CD4-positive, alpha-beta T cell (primary cell): ENCODE measurements at regions of chr19 and their contacts with region 1.

Region 1: GRCh38 chr19:2475702-2476450 is at the start of gene GADD45B:
- DNase-seq: peak; percentile 96 to 98 (median 98)
- ATAC-seq: peak; percentile 56
- H3K4me3 ChIP-seq: peak within 1 kb of the TSS; percentile 86
- H3K4me3 Mint-ChIP-seq: peak within 1 kb of the TSS; percentile 100
- H3K27ac ChIP-seq: peak within 1 kb of the TSS; percentile 37 to 80
- H3K27ac Mint-ChIP-seq: peak within 1 kb of the TSS; percentile 91
- H3K4me1 ChIP-seq: peaks cover 45% of the 10 kb centered on the region
- H3K4me1 Mint-ChIP-seq: peaks cover 25% of the 10 kb centered on the region
- H3K27me3 ChIP-seq: no peaks in the 10 kb centered on the region
- H3K27me3 Mint-ChIP-seq: peaks cover 4% of the 10 kb centered on the region
- CTCF ChIP-seq: no peak
- total RNA-seq, gene GADD45B: 284 to 285 TPM

Region 2: DNA sequence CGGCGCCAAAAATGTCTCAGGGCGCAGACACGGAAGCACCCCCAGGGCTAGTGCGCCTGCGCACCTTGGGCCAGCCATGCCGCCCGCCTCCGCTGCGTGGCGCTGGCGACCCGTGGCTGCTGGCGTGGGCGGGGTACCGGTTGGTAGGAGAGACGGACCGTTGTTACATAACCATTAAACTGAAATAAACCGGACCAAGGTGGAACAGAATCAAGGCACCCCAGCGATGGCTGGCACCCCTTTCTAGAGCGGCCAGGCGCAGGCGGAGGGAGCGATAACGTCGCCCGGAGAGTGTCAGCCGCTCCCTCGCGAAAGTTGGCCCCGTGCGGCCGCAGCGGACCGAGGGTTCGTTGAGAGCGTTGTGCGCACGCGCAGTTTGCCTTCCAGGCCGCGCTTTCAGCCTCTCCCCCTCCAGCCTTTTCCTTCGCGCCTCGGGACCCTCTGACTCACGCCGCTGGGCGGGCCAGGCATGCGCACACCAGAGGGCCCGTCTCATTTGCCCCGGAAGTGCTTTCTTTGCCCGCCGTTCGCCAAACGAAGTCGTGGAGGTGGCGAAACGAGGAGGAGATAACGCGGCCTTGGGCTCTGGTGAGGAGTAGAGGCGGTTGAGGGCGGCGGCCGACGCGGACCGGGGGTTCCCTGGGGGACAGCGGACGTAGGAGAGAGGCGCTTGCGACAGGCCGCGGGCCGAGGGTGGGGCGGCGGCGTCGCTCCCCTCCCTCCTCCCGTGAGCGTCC is 239.4 kb before region 1 on chr19 and contains the starts of genes PLEKHJ1 and SF3A2:
- CTCF ChIA-PET with region 1: no interaction called
- POLR2A ChIA-PET with region 1: interaction called, 7 read pairs
- intact Hi-C with region 1: loop called in 1 of 2 experiments (anchors 5 kb)
- DNase-seq: peak; percentile 94 to 99 (median 98)
- ATAC-seq: peak; percentile 81
- H3K4me3 ChIP-seq: peak within 1 kb of the TSS; percentile 80
- H3K4me3 Mint-ChIP-seq: peak within 1 kb of the TSS; percentile 98
- H3K27ac ChIP-seq: peak within 1 kb of the TSS; percentile 98 to 99
- H3K27ac Mint-ChIP-seq: peak within 1 kb of the TSS; percentile 99
- H3K4me1 ChIP-seq: peaks cover 79% of the 10 kb centered on the region
- H3K4me1 Mint-ChIP-seq: peaks cover 63% of the 10 kb centered on the region
- H3K27me3 ChIP-seq: no peaks in the 10 kb centered on the region
- H3K27me3 Mint-ChIP-seq: peaks cover 4% of the 10 kb centered on the region
- CTCF ChIP-seq: peak; percentile 99
- total RNA-seq, gene PLEKHJ1: 21.4 to 23.2 TPM
- total RNA-seq, gene SF3A2: 186 to 194 TPM

Region 3: DNA sequence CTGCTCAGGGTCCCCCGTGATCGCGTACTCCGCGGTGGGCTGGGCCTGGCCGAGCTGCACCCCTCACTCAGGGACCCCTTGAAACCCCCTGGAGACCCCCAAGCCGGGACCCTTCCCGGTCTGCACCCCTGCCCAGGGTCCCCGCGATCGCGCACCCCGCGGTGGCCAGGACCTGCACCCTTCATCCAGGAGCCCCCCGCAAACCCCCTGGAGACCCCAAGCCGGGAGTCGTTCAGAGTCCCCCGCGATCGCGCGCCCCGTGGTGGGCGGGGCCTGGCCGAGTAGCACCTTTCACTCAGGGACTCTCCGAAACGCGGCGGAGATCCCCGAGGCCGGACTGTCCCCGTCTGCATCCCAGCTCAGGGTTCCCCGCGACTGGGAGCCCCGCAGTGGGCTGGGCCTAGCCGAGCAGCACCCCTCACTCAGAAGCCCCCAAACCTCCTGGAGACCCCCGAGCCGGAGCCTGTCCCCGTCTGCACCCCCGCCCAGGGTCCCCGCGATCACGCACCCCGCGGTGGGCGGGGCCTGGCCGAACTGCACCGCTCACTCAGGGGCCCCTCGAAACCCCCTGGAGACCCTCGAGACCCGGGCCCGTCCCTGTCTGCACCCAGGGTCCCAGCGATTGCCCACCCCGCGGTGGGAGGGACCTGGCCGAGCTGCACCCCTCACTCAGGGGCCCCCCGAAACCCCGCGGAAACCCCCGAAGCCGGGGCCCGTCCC is 19.9 kb before region 1 on chr19:
- CTCF ChIA-PET with region 1: no interaction called
- POLR2A ChIA-PET with region 1: interaction called, 45 read pairs
- intact Hi-C with region 1: no loop called
- DNase-seq: peak in 9 of 14 experiments; percentile 19 to 83 (median 42)
- ATAC-seq: peak; percentile 33
- H3K4me3 ChIP-seq: peak overlapping the region; percentile 74
- H3K4me3 Mint-ChIP-seq: peak overlapping the region; percentile 85
- H3K27ac ChIP-seq: no peak overlapping the region
- H3K27ac Mint-ChIP-seq: peak overlapping the region; percentile 30
- H3K4me1 ChIP-seq: peaks cover 25% of the 10 kb centered on the region
- H3K4me1 Mint-ChIP-seq: peaks cover 13% of the 10 kb centered on the region
- H3K27me3 ChIP-seq: no peaks in the 10 kb centered on the region
- H3K27me3 Mint-ChIP-seq: no peaks in the 10 kb centered on the region
- CTCF ChIP-seq: no peak

Region 4: GRCh38 chr19:2494444-2495129 is 18.7 kb after region 1 on chr19:
- CTCF ChIA-PET with region 1: no interaction called
- POLR2A ChIA-PET with region 1: interaction called, 47 read pairs
- intact Hi-C with region 1: no loop called
- DNase-seq: peak; percentile 11 to 87 (median 48)
- ATAC-seq: peak; percentile 80
- H3K4me3 ChIP-seq: peak overlapping the region; percentile 74
- H3K4me3 Mint-ChIP-seq: peak overlapping the region; percentile 68
- H3K27ac ChIP-seq: no peak overlapping the region
- H3K27ac Mint-ChIP-seq: no peak overlapping the region
- H3K4me1 ChIP-seq: peaks cover 38% of the 10 kb centered on the region
- H3K4me1 Mint-ChIP-seq: peaks cover 14% of the 10 kb centered on the region
- H3K27me3 ChIP-seq: peaks cover 17 to 23% of the 10 kb centered on the region in 2 experiments
- H3K27me3 Mint-ChIP-seq: peaks cover 40% of the 10 kb centered on the region
- CTCF ChIP-seq: no peak

Region 5: DNA sequence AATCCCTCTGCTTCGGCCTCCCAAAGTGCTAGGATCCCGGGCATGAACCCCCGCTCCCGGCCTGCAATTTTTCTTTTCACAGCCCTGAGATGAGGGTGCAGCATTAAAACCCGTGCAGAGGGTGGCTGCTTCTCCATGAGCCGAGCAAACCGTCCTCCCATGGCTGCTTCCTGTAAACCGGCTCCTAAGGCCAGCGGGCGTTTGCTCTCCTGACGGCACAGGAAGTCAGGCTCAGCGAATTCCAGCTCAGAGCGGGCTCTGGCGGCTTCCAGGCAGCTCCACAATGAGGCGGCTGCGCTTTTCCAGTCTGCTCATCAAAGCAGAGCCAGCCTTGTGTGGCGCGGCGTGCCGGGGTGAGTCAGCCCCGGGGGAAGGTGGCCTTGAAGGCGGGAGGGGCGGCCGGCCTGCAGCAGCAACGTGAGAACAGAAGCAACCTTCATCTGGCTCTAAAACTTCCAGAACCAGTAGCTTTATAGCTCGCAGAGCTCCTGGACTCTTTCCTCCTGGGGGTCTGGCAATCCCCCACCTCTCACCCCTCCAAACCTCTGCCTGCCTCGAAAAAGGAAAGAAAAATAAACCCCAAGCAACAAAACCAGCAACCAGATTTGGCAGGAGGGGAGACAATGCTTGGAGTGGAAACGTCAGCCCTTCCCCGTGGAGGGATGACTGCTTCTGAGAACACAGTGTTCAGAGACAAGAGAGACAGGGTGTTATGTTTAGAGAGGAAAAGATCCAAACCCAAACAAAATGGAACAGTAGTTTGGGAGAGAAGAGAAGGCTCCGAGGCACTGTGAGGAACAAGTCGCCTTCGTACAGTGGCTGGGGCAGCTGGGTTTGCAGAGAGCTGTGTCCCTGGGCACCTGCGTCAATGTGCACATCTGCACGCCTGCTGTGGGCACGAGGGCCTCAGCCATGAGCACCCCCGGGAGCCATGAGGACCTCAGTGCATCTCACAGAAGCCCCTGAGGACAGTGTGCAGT is 67.9 kb after region 1 on chr19:
- CTCF ChIA-PET with region 1: interaction called, 6 read pairs
- POLR2A ChIA-PET with region 1: interaction called, 19 read pairs
- intact Hi-C with region 1: loop called in 1 of 2 experiments (anchors 10 kb)
- DNase-seq: peak; percentile 23 to 84 (median 66)
- ATAC-seq: peak; percentile 93
- H3K4me3 ChIP-seq: peak overlapping the region; percentile 49
- H3K4me3 Mint-ChIP-seq: peak overlapping the region; percentile 51
- H3K27ac ChIP-seq: no peak overlapping the region
- H3K27ac Mint-ChIP-seq: no peak overlapping the region
- H3K4me1 ChIP-seq: peaks cover 20% of the 10 kb centered on the region
- H3K4me1 Mint-ChIP-seq: peaks cover 9% of the 10 kb centered on the region
- H3K27me3 ChIP-seq: no peaks in the 10 kb centered on the region
- H3K27me3 Mint-ChIP-seq: no peaks in the 10 kb centered on the region
- CTCF ChIP-seq: no peak

Region 6: GRCh38 chr19:2578901-2579677 is 103.2 kb after region 1 on chr19:
- CTCF ChIA-PET with region 1: interaction called, 20 read pairs
- POLR2A ChIA-PET with region 1: interaction called, 35 read pairs
- intact Hi-C with region 1: loop called (anchors 1 kb)
- DNase-seq: peak; percentile 29 to 80 (median 64)
- ATAC-seq: peak; percentile 46
- H3K4me3 ChIP-seq: peak overlapping the region; percentile 30
- H3K4me3 Mint-ChIP-seq: no peak overlapping the region
- H3K27ac ChIP-seq: no peak overlapping the region
- H3K27ac Mint-ChIP-seq: no peak overlapping the region
- H3K4me1 ChIP-seq: peaks cover 12% of the 10 kb centered on the region
- H3K4me1 Mint-ChIP-seq: no peaks in the 10 kb centered on the region
- H3K27me3 ChIP-seq: peaks cover 2 to 5% of the 10 kb centered on the region in 2 experiments
- H3K27me3 Mint-ChIP-seq: peaks cover 5% of the 10 kb centered on the region
- CTCF ChIP-seq: peak; percentile 70

Region 7: DNA sequence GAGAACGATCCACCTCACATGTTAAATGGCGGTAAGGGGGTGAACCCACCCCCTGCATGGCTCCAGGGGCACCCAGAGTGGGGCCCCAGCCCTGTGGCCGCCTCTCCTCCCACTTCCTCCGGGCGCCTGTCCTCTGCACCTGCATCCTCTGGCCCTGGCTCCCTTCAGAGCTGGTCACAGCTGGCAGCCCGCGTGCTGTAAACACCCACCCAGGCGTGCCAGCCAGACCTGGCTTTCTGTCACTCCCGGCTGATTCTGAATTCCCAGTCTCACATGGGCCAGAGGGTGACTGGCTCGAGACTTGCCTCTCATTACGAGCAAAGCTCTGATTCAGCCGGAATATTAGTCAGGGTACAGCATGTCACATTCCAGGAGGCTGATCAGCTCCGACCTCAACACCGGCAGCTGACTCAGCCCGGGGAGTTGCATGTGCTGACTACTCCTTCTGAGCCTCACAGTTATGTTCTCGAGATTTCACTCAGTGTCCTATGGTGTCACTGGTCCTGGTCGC is 151.5 kb after region 1 on chr19:
- CTCF ChIA-PET with region 1: interaction called, 3 read pairs
- POLR2A ChIA-PET with region 1: interaction called, 272 read pairs
- intact Hi-C with region 1: no loop called
- DNase-seq: peak in 3 of 14 experiments; percentile 57 to 79 (median 68)
- ATAC-seq: peak; percentile 26
- H3K4me3 ChIP-seq: no peak overlapping the region
- H3K4me3 Mint-ChIP-seq: no peak overlapping the region
- H3K27ac ChIP-seq: peak overlapping the region in 1 of 2 donors; percentile 11
- H3K27ac Mint-ChIP-seq: peak overlapping the region; percentile 81
- H3K4me1 ChIP-seq: peaks cover 48% of the 10 kb centered on the region
- H3K4me1 Mint-ChIP-seq: peaks cover 51% of the 10 kb centered on the region
- H3K27me3 ChIP-seq: no peaks in the 10 kb centered on the region
- H3K27me3 Mint-ChIP-seq: no peaks in the 10 kb centered on the region
- CTCF ChIP-seq: no peak

Region 8: GRCh38 chr19:2820112-2820702 is 344.3 kb after region 1 on chr19:
- CTCF ChIA-PET with region 1: no interaction called
- POLR2A ChIA-PET with region 1: no interaction called
- intact Hi-C with region 1: no loop called
- DNase-seq: peak in 1 of 14 experiments; percentile 15
- ATAC-seq: peak; percentile 5
- H3K4me3 ChIP-seq: peak overlapping the region; percentile 69
- H3K4me3 Mint-ChIP-seq: peak overlapping the region; percentile 84
- H3K27ac ChIP-seq: no peak overlapping the region
- H3K27ac Mint-ChIP-seq: no peak overlapping the region
- H3K4me1 ChIP-seq: peaks cover 17% of the 10 kb centered on the region
- H3K4me1 Mint-ChIP-seq: peaks cover 8% of the 10 kb centered on the region
- H3K27me3 ChIP-seq: no peaks in the 10 kb centered on the region
- H3K27me3 Mint-ChIP-seq: no peaks in the 10 kb centered on the region
- CTCF ChIP-seq: no peak